Stomach (tissue), 19 donors: ENCODE measurements at regions of chr5 and their contacts with region 1.

Region 1: DNA sequence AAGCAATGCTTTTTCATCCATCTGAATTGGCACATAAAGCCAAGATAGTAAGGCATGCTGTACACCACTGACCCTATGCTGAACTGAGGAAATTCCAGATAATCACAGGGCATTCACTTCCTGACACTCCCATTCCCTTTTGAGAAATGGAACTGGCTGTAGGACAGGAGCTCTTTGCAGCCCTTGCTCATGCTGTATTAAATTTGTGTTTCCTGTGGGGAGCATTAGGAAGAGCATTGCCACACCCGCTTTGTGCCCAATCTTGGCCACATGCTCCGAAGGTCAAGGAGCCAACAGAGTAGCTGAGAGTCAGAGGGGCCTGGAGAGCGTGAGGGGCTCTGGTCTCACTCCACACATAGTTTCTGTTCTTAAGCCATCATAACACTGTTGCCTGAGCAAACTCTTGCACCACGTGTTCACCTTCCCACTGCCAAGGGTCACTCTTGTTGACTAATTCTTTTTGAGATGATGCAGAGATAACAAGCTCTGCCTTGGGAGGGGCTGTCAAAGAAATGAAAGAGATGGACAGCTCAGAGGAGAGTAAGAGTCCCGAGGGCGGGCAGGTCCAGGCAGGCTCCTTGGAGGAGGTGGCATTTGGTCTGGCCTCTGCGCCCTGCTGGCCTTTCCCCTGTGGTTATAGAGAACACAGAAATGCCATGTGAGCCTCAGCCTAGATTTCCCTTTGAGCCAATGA is 31.7 kb upstream of the ARAP3 start:
- DNase-seq: no peak
- H3K4me3 ChIP-seq: no peak overlapping the region
- H3K27ac ChIP-seq: no peak overlapping the region
- H3K4me1 ChIP-seq: peaks cover 0 to 7% (median 2%) of the 10 kb centered on the region in 4 donors
- H3K27me3 ChIP-seq: peaks cover 0 to 33% (median 0%) of the 10 kb centered on the region in 3 donors
- CTCF ChIP-seq: no peak
- EP300 ChIP-seq: no peak
- POLR2A ChIP-seq: no peak

Region 2: DNA sequence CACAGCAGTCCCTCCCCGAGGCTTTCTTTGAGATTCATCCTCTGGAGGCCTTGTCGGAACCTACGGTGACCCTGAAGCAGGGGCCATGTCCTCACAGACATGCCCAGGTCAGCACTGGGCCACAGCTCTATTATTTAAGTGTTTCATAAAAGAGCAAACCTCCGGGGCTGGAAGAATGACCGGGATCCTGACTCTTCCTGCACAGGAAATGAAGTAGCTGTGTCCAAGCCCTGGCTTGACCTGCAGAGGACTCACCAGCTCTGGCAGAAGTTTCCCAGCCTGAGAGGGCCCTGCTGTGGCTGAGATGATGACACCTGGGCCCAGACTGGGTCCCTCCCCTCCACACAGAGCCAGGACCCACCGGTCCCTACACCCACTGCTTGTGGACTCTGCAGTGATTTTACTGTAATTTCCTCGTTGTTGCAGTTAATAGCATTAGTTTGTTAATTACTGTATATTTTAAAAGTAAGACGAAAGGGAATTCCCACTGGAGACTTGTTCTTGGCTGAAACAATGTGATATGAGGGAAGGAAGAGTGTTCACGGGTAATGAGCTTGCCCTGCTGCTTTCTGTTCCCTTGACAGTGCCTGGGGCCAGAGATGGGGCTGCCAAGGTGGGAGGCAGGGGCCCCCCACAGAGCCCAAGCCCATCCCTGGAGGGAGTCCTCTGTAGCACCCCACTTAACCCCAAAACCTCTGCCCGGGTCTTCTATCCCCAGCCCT is 92.3 kb after region 1 on chr5:
- intact Hi-C with region 1: loop called (anchors 10 kb)
- DNase-seq: peak in 1 of 2 donors; percentile 48
- H3K4me3 ChIP-seq: no peak overlapping the region
- H3K27ac ChIP-seq: peak overlapping the region in 4 of 5 donors; percentile 6 to 68 (median 46)
- H3K4me1 ChIP-seq: no peaks in the 10 kb centered on the region
- H3K27me3 ChIP-seq: peaks cover 0 to 88% (median 0%) of the 10 kb centered on the region in 3 donors
- CTCF ChIP-seq: no peak
- EP300 ChIP-seq: no peak
- POLR2A ChIP-seq: no peak